Mammary epithelial cell (primary cell): ENCODE measurements at regions of chr11 and their contacts with region 1.

Region 1: DNA sequence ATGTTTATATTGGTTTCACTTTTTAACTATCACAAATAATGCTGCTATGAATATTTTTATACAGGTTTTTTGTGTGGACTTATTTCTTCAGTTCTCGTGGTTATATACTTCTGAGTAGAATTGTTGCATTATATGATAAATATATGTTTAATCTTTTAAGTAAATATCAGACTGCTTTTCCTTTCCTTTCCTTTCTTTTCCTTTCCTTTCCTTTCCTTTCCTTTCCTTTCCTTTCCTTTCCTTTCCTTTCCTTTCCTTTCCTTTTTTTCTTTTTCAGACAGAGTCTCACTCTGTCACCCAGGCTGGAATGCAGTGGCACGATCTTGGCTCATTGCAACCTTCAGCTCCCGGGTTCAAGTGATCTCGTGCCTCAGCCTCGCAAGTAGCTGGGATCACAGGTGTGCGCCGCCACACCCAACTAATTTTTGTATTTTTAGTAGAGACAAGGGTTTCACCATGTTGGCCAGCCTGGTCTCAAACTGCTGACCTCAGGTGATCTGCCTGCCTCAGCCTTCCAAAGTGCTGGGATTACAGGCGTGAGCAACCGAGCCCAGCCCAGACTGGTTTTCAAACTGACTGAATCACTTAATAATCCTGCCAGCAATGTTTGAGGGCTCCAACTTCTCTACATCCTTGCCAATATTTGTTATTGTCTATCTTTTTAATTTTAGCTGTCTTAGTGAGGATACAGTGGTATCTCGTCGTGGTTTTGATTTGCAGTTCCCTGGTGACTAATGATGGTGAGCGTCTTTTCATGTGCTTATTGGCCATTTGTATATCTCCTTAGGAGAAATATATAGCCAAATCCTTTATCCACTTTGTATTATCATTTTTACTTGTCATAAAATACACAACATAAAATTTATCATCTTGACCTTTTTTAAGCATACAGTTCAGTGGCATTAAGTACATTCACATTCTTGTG is 21.9 kb downstream of the HTR3B start:
- DNase-seq: peak; percentile 11
- H3K4me3 ChIP-seq: no peak overlapping the region
- H3K27ac ChIP-seq: no peak overlapping the region
- H3K4me1 ChIP-seq: no peaks in the 10 kb centered on the region
- H3K27me3 ChIP-seq: no peaks in the 10 kb centered on the region
- CTCF ChIP-seq: no peak

Region 2: GRCh38 chr11:113632981-113633380 is 293.6 kb before region 1 on chr11:
- CTCF ChIA-PET with region 1: no interaction called
- dilution Hi-C with region 1: no loop called
- in situ Hi-C with region 1: no loop called
- intact Hi-C with region 1: no loop called
- DNase-seq: no peak
- H3K4me3 ChIP-seq: no peak overlapping the region
- H3K27ac ChIP-seq: no peak overlapping the region
- H3K4me1 ChIP-seq: peaks cover 5% of the 10 kb centered on the region
- H3K27me3 ChIP-seq: no peaks in the 10 kb centered on the region
- CTCF ChIP-seq: no peak

Region 3: GRCh38 chr11:113806406-113806805 is 120.1 kb before region 1 on chr11:
- CTCF ChIA-PET with region 1: no interaction called
- dilution Hi-C with region 1: no loop called
- in situ Hi-C with region 1: no loop called
- intact Hi-C with region 1: no loop called
- DNase-seq: peak; percentile 21
- H3K4me3 ChIP-seq: no peak overlapping the region
- H3K27ac ChIP-seq: no peak overlapping the region
- H3K4me1 ChIP-seq: no peaks in the 10 kb centered on the region
- H3K27me3 ChIP-seq: no peaks in the 10 kb centered on the region
- CTCF ChIP-seq: peak; percentile 48 to 59

Region 4: GRCh38 chr11:113831314-113831713 is 95.2 kb before region 1 on chr11:
- CTCF ChIA-PET with region 1: no interaction called
- dilution Hi-C with region 1: no loop called
- in situ Hi-C with region 1: no loop called
- intact Hi-C with region 1: no loop called
- DNase-seq: no peak
- H3K4me3 ChIP-seq: no peak overlapping the region
- H3K27ac ChIP-seq: no peak overlapping the region
- H3K4me1 ChIP-seq: peaks cover 12% of the 10 kb centered on the region
- H3K27me3 ChIP-seq: no peaks in the 10 kb centered on the region
- CTCF ChIP-seq: no peak

Region 5: GRCh38 chr11:113991170-113991569 is 64.6 kb after region 1 on chr11:
- CTCF ChIA-PET with region 1: no interaction called
- dilution Hi-C with region 1: no loop called
- in situ Hi-C with region 1: no loop called
- intact Hi-C with region 1: no loop called
- DNase-seq: peak; percentile 30
- H3K4me3 ChIP-seq: no peak overlapping the region
- H3K27ac ChIP-seq: no peak overlapping the region
- H3K4me1 ChIP-seq: no peaks in the 10 kb centered on the region
- H3K27me3 ChIP-seq: no peaks in the 10 kb centered on the region
- CTCF ChIP-seq: no peak

Region 6: DNA sequence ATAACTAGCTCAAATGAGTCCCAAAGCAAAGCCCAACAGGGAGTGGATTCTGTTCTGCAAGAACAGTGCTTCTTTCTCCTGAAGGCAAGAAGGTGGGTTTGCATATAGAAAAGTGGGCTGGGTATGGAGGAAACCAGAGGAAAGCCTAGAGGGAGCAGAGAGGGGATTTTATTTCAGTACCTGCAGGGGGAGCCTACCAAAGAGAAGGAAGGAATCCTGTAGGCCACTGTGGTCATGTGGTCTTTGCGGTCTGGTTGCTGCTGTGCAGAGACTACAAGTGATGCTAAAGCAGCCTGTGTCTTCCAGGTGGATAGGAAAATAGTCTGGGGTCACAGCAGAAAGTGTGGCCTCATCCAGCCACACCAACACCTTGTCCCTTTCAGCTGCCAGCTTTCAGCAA is 99.8 kb after region 1 on chr11:
- CTCF ChIA-PET with region 1: interaction called, 36 read pairs
- dilution Hi-C with region 1: no loop called
- in situ Hi-C with region 1: no loop called
- intact Hi-C with region 1: no loop called
- DNase-seq: no peak
- H3K4me3 ChIP-seq: no peak overlapping the region
- H3K27ac ChIP-seq: no peak overlapping the region
- H3K4me1 ChIP-seq: no peaks in the 10 kb centered on the region
- H3K27me3 ChIP-seq: no peaks in the 10 kb centered on the region
- CTCF ChIP-seq: no peak